ENCODE measurements at regions of chr2 and their contacts with region 1.

Region 1: DNA sequence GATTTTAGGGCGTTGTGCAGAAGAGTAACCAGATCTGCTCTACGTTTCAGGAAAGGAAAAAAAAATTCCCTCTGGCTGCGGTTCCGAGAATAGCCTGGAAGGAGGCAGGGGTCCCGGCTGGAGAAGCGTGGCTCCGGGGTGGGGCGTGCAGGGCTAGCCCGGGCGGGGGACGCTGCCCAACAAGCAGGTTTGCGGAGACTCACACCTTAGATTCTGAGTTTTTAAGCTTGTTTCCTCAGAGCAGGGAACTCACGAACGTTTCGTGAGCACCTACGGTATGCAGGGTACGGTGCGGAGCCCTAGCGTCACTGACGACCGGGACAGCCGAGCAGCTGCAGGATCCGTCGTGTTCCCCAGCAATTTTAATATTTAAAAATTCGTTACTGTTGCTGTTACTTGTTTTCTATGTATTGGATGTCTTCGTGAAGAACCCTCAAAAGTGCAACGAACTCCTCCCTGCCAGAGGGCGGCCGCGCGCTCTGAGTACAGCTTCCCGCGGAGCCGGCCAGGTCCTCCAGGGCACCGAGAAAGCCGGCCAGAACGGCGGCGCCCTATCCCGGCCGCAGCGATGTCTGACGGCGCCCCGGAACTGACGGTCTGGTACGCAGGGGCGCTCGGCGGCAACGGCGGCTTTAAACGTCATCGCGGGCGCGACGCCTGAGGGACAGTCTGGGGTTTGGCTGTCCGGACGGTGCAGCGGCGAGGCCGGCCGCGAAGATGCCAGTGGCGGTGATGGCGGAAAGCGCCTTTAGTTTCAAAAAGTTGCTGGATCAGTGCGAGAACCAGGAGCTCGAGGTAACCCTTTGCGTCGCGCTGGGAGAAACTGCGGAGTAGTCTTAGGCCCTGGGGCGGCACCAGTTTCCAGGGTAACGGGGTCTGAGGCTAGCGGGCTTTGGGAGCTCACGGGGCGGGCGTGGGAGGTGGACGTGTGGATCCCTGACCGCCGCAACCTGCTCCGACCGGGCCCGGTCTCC is at the start of gene COPS8:
- DNase-seq: peak; percentile 94
- ATAC-seq: peak; percentile 99
- H3K4me3 Mint-ChIP-seq: peak within 1 kb of the TSS; percentile 91
- H3K27ac Mint-ChIP-seq: peak within 1 kb of the TSS; percentile 97
- H3K4me1 Mint-ChIP-seq: peaks cover 13% of the 10 kb centered on the region
- H3K27me3 Mint-ChIP-seq: no peaks in the 10 kb centered on the region
- total RNA-seq, gene COPS8: 39.5 to 42.2 TPM

Region 2: GRCh38 chr2:236971131-236971821 is 114.3 kb before region 1 on chr2:
- CTCF ChIA-PET with region 1: no interaction called
- POLR2A ChIA-PET with region 1: interaction called, 12 read pairs
- DNase-seq: no peak
- ATAC-seq: no peak
- H3K4me3 Mint-ChIP-seq: no peak overlapping the region
- H3K27ac Mint-ChIP-seq: no peak overlapping the region
- H3K4me1 Mint-ChIP-seq: peaks cover 45% of the 10 kb centered on the region
- H3K27me3 Mint-ChIP-seq: no peaks in the 10 kb centered on the region

Region 3: GRCh38 chr2:237059155-237059875 is 26.2 kb before region 1 on chr2:
- CTCF ChIA-PET with region 1: no interaction called
- POLR2A ChIA-PET with region 1: no interaction called
- DNase-seq: no peak
- ATAC-seq: no peak
- H3K4me3 Mint-ChIP-seq: no peak overlapping the region
- H3K27ac Mint-ChIP-seq: no peak overlapping the region
- H3K4me1 Mint-ChIP-seq: peaks cover 2% of the 10 kb centered on the region
- H3K27me3 Mint-ChIP-seq: no peaks in the 10 kb centered on the region

Region 4: DNA sequence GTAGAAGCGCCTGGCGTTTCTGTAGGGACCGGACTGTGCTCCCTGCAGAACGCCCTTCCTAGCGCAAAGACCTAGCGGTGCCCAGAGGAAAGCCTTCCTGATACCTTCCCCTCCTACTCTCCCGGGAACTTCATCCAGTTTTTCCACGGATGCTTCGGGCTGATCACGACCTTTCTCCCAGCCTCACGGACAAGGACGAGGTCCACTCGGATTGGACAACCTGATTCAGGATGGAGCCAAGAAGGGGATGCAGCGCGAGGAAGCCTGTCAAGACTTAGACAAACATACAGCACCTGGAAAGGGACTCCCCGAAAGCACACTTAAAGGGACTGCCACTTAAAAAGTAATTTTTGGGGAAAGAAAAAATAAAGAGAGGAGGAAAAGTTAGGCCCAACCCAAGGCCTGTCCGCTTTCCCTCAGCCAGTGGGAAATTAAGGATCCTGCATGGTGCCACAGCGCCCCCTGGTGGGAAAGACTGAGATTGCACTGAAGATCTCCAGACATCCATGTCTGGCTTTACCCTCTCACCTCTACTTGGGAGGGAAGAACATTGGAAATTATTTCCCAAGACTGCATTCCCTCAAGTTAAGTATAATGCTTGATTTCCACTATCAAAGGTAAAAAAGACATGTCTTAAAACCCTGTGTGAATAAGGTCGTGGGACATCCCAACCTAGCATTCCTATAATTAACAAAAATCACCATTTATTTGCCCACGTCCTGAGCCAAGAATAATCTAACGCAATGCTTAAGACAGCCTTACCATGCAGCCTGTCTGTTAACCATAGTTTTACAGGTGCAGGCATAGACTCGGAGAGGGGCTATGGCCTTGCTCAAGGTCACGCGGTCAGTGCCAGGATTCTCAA is 13.2 kb before region 1 on chr2:
- CTCF ChIA-PET with region 1: interaction called, 11 read pairs
- POLR2A ChIA-PET with region 1: interaction called, 4 read pairs
- DNase-seq: peak; percentile 76
- ATAC-seq: no peak
- H3K4me3 Mint-ChIP-seq: no peak overlapping the region
- H3K27ac Mint-ChIP-seq: no peak overlapping the region
- H3K4me1 Mint-ChIP-seq: no peaks in the 10 kb centered on the region
- H3K27me3 Mint-ChIP-seq: peaks cover 3% of the 10 kb centered on the region